ENCODE measurements at regions of chrX and their contacts with region 1.

Region 1: GRCh38 chrX:47482512-47483309 is at the start of gene ZNF41:
- DNase-seq: peak; percentile 82
- H3K4me3 Mint-ChIP-seq: peak within 1 kb of the TSS; percentile 84
- H3K27ac Mint-ChIP-seq: peak within 1 kb of the TSS; percentile 90
- H3K4me1 Mint-ChIP-seq: peaks cover 12% of the 10 kb centered on the region
- H3K27me3 Mint-ChIP-seq: no peaks in the 10 kb centered on the region
- CTCF ChIP-seq: no peak
- total RNA-seq, gene ZNF41: 5.6 and 7.0 TPM in 2 replicates

Region 2: DNA sequence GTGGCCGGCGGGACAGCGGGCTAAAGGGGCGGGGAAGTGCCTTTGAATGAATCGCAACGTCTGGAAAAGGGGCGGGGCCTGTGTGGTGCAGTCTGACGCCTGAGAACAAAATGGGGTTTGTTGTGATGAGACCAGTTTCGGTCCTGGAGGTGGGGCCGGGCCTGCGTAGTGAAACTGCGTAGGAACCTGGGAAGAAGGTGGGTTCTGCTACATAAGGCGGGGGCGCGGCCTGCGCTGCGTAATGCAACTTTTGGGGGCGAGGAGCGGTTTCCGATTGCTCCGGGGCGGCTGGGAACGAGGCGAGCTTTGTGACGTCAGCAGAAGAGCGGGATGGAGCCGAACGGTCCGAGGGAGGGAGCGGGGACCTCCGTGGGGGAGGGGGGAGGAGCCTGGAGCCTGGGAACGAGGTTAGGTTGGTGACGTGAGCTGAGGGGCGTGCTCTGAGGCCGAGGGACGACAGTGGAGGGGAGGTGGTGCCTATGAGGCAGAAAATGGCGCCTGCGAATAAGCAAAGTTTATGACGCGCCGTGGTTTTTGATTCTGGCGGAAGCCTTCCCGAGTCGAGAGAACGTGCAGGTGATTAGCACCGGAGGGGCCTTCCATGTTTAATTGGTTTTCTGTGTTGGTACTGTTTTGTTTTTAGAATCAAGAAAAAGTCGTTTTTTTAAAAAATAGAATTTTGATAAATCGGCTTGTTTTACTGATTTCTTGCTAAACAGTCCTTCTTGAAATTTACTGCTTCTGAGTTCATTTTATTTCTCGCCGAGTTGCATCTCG is 249.2 kb before region 1 on chrX:
- CTCF ChIA-PET with region 1: no interaction called
- POLR2A ChIA-PET with region 1: interaction called, 10 read pairs
- intact Hi-C with region 1: no loop called
- DNase-seq: peak; percentile 94
- H3K4me3 Mint-ChIP-seq: peak overlapping the region; percentile 95
- H3K27ac Mint-ChIP-seq: peak overlapping the region; percentile 100
- H3K4me1 Mint-ChIP-seq: peaks cover 6% of the 10 kb centered on the region
- H3K27me3 Mint-ChIP-seq: peaks cover 53% of the 10 kb centered on the region
- CTCF ChIP-seq: no peak

Region 3: DNA sequence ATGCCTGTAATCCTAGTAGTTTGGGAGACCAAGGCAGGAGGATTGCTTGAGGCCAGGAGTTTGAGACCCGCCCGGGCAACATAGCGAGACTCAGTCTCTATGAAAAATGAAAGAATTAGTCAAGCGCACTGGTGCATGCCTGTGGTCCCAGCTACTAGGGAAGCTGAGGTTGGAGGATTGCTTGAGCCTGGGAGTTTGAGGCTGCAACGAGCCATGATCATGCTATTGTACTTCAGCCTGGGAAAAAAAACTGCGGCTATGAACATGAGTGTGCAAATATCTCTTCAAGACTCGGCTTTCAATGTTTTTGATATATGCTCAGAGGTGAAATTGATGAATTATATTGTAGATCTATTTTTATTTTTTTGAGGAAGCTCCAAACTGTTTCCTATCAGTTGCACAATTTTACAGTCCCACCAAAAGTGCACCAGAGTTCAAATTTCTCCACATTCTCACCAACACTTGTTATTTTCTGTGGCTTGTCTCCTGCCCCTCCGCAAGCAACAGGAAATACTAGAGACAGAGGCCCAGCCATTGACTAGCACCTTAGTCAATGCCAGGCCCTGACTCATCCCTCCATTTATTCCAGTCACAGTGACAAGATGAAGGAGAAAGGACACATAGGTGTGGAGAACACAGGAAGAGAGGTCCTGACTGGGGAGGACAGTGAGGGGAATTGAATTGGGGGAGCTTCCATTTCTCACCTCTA is 33.4 kb after region 1 on chrX:
- CTCF ChIA-PET with region 1: no interaction called
- POLR2A ChIA-PET with region 1: interaction called, 10 read pairs
- intact Hi-C with region 1: no loop called
- DNase-seq: peak; percentile 73
- H3K4me3 Mint-ChIP-seq: no peak overlapping the region
- H3K27ac Mint-ChIP-seq: peak overlapping the region; percentile 88
- H3K4me1 Mint-ChIP-seq: peaks cover 12% of the 10 kb centered on the region
- H3K27me3 Mint-ChIP-seq: no peaks in the 10 kb centered on the region
- CTCF ChIP-seq: no peak